HepG2 (cell line): ENCODE measurements at regions of chr5 and their contacts with region 1.

Region 1: DNA sequence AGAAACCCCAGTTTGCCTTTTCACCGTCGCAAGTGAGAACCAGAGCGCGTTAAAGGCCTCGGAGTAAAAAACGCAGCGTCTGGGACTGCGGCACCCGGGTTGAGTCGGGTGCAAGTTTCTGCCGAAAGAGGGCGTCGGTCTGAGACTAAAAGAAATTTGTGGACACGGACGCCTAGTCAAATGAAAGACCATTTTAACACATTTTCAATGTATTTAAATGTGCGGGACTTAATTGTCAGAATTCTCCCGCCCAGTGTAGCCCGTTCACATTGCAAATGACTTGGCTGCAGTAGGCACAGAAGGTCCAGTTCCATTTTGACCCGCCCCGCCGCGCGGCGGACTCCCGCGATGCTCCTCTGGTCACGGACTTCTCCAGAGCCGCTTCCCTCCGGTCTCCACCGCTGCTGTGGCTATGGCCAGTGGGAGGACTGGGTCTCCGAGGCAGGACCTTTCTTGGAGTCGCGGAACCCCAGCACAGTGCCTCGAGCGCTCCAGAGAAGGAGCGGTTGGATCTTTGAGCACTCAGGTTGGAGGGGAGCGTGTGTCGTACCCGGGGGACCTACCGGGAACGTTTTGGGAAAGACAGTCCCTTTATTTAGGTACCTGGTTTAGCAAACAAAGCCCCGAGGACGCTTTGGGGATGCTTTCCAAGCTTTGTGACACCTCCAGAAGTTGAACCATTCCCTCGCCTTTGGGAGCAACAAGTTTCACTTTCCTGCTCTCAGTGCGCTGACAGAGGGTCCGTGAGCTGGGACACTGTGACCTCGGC is 1.2 kb upstream of the NPR3 start:
- DNase-seq: peak; percentile 41
- ATAC-seq: peak; percentile 90
- H3K4me3 ChIP-seq: peak overlapping the region; percentile 36 to 72 (median 49)
- H3K27ac ChIP-seq: no peak overlapping the region
- H3K4me1 ChIP-seq: no peaks in the 10 kb centered on the region
- H3K27me3 ChIP-seq: peaks cover 2 to 5% of the 10 kb centered on the region in 2 experiments; a peak in 4 of 5 replicates
- CTCF ChIP-seq: peak; percentile 72
- EP300 ChIP-seq: no peak
- POLR2A ChIP-seq: no peak
- RAD21 ChIP-seq: no peak

Region 2: GRCh38 chr5:31901807-31902530 is 808.0 kb before region 1 on chr5:
- CTCF ChIA-PET with region 1: no interaction called
- POLR2A ChIA-PET with region 1: no interaction called
- in situ Hi-C with region 1: no loop called
- intact Hi-C with region 1: no loop called
- DNase-seq: no peak
- ATAC-seq: no peak
- H3K4me3 ChIP-seq: no peak overlapping the region
- H3K27ac ChIP-seq: no peak overlapping the region
- H3K4me1 ChIP-seq: no peaks in the 10 kb centered on the region
- H3K27me3 ChIP-seq: peaks cover 1 to 33% of the 10 kb centered on the region in 2 experiments; a peak in 3 of 5 replicates
- CTCF ChIP-seq: no peak
- EP300 ChIP-seq: no peak
- POLR2A ChIP-seq: no peak
- RAD21 ChIP-seq: no peak

Region 3: GRCh38 chr5:32852535-32852934 is 142.6 kb after region 1 on chr5:
- CTCF ChIA-PET with region 1: interaction called, 3 read pairs
- POLR2A ChIA-PET with region 1: no interaction called
- in situ Hi-C with region 1: no loop called
- intact Hi-C with region 1: loop called (anchors 2 kb)
- DNase-seq: peak; percentile 22
- ATAC-seq: peak; percentile 89
- H3K4me3 ChIP-seq: no peak overlapping the region
- H3K27ac ChIP-seq: no peak overlapping the region
- H3K4me1 ChIP-seq: no peaks in the 10 kb centered on the region
- H3K27me3 ChIP-seq: no peaks in the 10 kb centered on the region
- CTCF ChIP-seq: peak; percentile 48
- EP300 ChIP-seq: no peak
- POLR2A ChIP-seq: no peak
- RAD21 ChIP-seq: no peak

Region 4: GRCh38 chr5:32942225-32942989 is 232.4 kb after region 1 on chr5:
- CTCF ChIA-PET with region 1: interaction called, 14 read pairs
- POLR2A ChIA-PET with region 1: no interaction called
- in situ Hi-C with region 1: loop called (anchors 25 kb)
- intact Hi-C with region 1: loop called (anchors 1 kb)
- DNase-seq: peak; percentile 38
- ATAC-seq: peak; percentile 88
- H3K4me3 ChIP-seq: no peak overlapping the region
- H3K27ac ChIP-seq: no peak overlapping the region
- H3K4me1 ChIP-seq: no peaks in the 10 kb centered on the region
- H3K27me3 ChIP-seq: no peaks in the 10 kb centered on the region; a peak in 1 of 5 replicates
- CTCF ChIP-seq: peak; percentile 57
- EP300 ChIP-seq: no peak
- POLR2A ChIP-seq: no peak
- RAD21 ChIP-seq: no peak

Region 5: GRCh38 chr5:33180900-33181299 is 470.9 kb after region 1 on chr5:
- CTCF ChIA-PET with region 1: no interaction called
- POLR2A ChIA-PET with region 1: no interaction called
- in situ Hi-C with region 1: loop called (anchors 25 kb)
- intact Hi-C with region 1: no loop called
- DNase-seq: no peak
- ATAC-seq: no peak
- H3K4me3 ChIP-seq: no peak overlapping the region
- H3K27ac ChIP-seq: no peak overlapping the region
- H3K4me1 ChIP-seq: no peaks in the 10 kb centered on the region
- H3K27me3 ChIP-seq: no peaks in the 10 kb centered on the region
- CTCF ChIP-seq: peak; percentile 37
- EP300 ChIP-seq: no peak
- POLR2A ChIP-seq: no peak
- RAD21 ChIP-seq: no peak

Region 6: DNA sequence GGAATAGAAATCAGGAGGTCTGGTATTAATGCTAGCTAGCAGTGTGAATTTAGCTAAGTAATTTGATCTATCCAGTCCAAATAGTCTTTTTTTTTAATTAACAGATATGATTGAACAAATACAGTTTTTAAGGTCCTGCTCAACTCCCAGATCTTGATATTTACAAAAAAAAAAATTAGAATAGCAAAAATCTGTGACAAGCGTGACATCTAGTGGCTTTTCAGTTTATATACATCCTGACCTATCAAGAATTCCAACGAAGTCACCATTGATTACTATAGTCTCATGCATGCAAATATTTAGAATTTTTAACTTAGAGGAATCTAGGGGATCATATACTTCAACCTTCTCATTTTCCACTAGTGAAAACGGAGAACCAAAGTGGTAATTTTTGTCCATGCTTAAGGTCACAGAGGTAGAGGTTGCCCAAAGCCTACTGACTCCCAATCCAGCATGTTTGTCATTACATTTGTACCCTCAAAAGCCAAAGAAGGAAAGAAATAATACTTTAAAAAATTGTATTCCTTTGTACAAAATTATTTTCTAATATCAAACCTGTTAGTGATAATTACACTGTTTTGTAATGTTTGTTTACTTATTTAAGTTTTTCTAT is 713.2 kb after region 1 on chr5:
- CTCF ChIA-PET with region 1: no interaction called
- POLR2A ChIA-PET with region 1: no interaction called
- in situ Hi-C with region 1: loop called (anchors 10 kb)
- intact Hi-C with region 1: no loop called
- DNase-seq: peak; percentile 6
- ATAC-seq: peak; percentile 50
- H3K4me3 ChIP-seq: no peak overlapping the region
- H3K27ac ChIP-seq: no peak overlapping the region
- H3K4me1 ChIP-seq: no peaks in the 10 kb centered on the region
- H3K27me3 ChIP-seq: no peaks in the 10 kb centered on the region; a peak in 1 of 5 replicates
- CTCF ChIP-seq: peak; percentile 53
- EP300 ChIP-seq: no peak
- POLR2A ChIP-seq: no peak
- RAD21 ChIP-seq: no peak